Activated naive CD4-positive, alpha-beta T cell treated with anti-CD3 and anti-CD28 coated beads, Interleukin-2, amount 10 ng/mL, durations not matched to agents 7 days and 5 days (primary cell): ENCODE measurements at regions of chr19 and their contacts with region 1.

Region 1: GRCh38 chr19:7680606-7681339 is at the start of gene TRAPPC5:
- DNase-seq: peak; percentile 88
- H3K4me3 Mint-ChIP-seq: peak within 1 kb of the TSS; percentile 90
- H3K27ac Mint-ChIP-seq: peak within 1 kb of the TSS; percentile 93
- H3K4me1 Mint-ChIP-seq: peaks cover 51% of the 10 kb centered on the region
- H3K27me3 Mint-ChIP-seq: peaks cover 31% of the 10 kb centered on the region

Region 2: GRCh38 chr19:7366701-7367420 is 313.9 kb before region 1 on chr19:
- CTCF ChIA-PET with region 1: interaction called, 10 read pairs
- DNase-seq: peak; percentile 38
- H3K4me3 Mint-ChIP-seq: no peak overlapping the region
- H3K27ac Mint-ChIP-seq: peak overlapping the region; percentile 16
- H3K4me1 Mint-ChIP-seq: peaks cover 3% of the 10 kb centered on the region
- H3K27me3 Mint-ChIP-seq: no peaks in the 10 kb centered on the region

Region 3: DNA sequence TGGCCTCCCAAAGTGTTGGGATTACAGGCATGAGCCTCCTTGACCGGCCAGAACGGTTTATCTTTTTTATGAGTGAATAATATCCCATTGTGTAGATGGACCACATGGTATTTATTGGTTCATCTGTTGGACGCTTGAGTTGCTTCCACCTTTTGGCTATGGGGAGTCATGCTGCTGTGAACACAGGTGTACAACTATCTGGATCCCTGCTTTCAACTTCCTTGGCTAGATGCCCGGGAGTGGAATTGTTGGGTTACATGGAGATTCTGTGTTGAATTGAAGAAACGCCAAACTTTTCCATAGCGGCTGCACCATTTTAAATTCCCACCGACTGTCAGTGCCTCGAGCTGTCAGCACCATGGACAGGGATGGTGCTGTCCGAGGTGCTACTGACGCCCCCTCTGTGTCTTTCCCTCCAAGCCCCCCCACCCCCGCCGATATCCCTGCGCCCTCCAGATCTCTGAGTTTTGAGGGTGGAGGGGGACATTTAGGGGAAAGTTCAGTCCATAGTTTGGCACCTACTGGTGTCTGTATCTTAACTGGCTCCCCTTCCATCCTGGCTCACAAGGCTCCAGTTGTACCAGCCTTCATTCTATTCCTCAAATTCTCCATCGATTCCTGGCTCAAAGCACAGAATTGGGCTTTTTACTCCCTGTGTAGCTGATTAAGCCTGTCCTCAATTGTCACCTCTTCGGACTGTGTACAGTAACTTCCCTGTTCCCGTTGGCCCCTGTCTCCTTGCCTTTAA is 118.0 kb before region 1 on chr19:
- CTCF ChIA-PET with region 1: interaction called, 29 read pairs
- DNase-seq: peak; percentile 48
- H3K4me3 Mint-ChIP-seq: no peak overlapping the region
- H3K27ac Mint-ChIP-seq: no peak overlapping the region
- H3K4me1 Mint-ChIP-seq: no peaks in the 10 kb centered on the region
- H3K27me3 Mint-ChIP-seq: no peaks in the 10 kb centered on the region

Region 4: GRCh38 chr19:7636691-7637373 is 43.9 kb before region 1 on chr19 and contains the start of gene STXBP2:
- CTCF ChIA-PET with region 1: interaction called, 10 read pairs
- DNase-seq: peak; percentile 94
- H3K4me3 Mint-ChIP-seq: peak within 1 kb of the TSS; percentile 81
- H3K27ac Mint-ChIP-seq: peak within 1 kb of the TSS; percentile 90
- H3K4me1 Mint-ChIP-seq: peaks cover 37% of the 10 kb centered on the region
- H3K27me3 Mint-ChIP-seq: peaks cover 4% of the 10 kb centered on the region

Region 5: GRCh38 chr19:7652061-7652641 is 28.6 kb before region 1 on chr19:
- CTCF ChIA-PET with region 1: interaction called, 38 read pairs
- DNase-seq: peak; percentile 89
- H3K4me3 Mint-ChIP-seq: peak overlapping the region; percentile 36
- H3K27ac Mint-ChIP-seq: peak overlapping the region; percentile 81
- H3K4me1 Mint-ChIP-seq: peaks cover 19% of the 10 kb centered on the region
- H3K27me3 Mint-ChIP-seq: peaks cover 25% of the 10 kb centered on the region

Region 6: DNA sequence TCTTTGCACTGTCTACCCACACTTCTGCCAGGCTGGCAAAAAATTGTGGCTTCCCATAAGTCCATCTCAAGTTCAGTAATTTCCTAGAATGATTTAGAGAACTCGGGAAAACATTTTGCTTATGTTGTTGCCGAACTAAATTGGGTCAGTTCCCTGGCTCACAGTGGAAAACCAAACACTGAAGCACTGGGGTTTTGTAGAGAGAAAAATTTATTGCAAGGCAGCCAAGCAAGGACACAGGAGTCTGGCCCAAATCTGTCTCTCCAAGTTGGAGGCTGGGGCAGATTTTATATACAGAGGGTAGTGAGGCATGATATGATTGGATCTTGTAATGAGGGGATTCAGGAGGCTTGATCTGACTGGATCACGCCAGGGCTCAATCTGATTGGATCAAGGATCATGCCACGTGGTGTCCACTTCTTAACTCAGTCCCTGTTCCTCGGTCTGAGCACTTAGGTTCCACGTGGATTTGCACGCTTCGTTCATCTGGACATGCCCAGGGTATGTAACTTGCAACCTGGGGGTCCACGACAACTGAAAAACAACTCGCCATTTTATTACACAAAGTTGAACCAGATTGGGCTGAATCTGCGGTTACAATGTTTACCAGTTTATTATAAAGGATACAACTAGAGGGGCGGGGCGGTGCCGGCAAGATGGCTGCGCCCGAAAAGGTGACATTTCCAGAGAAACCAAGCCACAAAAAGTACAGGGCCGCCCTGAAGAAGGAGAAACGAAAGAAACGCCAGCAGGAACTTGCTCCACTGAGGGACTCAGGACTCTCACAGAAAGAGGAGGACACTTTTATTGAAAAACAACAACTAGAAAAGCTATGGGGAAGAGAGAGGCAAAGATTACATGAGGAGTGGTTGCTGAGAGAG is 59.3 kb after region 1 on chr19:
- CTCF ChIA-PET with region 1: no interaction called
- DNase-seq: no peak
- H3K4me3 Mint-ChIP-seq: no peak overlapping the region
- H3K27ac Mint-ChIP-seq: no peak overlapping the region
- H3K4me1 Mint-ChIP-seq: no peaks in the 10 kb centered on the region
- H3K27me3 Mint-ChIP-seq: peaks cover 47% of the 10 kb centered on the region

Region 7: DNA sequence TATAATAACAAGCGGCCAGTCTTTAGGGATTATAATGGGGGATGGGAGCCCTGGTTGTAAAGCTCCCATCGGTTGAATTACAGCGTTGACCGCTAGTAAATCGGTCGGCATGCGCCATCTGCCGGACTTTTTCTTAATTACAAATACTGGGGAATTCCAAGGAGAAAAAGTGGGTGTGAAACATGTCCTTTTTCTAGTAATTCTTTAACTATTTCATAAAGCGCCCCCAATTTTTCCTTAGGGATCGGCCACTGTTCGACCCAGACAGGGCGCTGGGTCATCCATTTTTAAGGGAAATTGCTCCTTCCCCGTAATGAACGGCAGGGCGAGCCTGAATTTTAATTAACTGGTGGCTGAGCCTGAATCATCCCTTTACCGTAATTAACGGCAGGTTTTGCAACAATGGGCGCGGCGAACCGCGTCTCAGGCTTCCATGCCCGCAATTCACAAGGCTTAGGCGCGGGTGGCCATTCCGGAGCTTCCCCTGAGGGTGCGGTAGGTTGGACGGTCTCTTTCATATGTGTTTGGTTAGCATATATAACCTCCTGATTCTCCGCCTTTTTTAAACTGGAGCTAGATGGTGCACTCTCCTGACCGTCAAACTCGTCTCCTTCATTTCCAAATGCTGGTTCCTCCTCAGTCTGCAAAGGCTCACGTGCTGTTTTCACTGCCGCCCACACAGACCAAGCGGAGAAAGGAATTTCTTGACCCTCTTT is 119.0 kb after region 1 on chr19:
- CTCF ChIA-PET with region 1: interaction called, 31 read pairs
- DNase-seq: peak; percentile 70
- H3K4me3 Mint-ChIP-seq: no peak overlapping the region
- H3K27ac Mint-ChIP-seq: no peak overlapping the region
- H3K4me1 Mint-ChIP-seq: peaks cover 5% of the 10 kb centered on the region
- H3K27me3 Mint-ChIP-seq: peaks cover 42% of the 10 kb centered on the region